Esophagus muscularis mucosa (tissue), 4 donors: ENCODE measurements at regions of chr20 and their contacts with region 1.

Region 1: GRCh38 chr20:41339507-41340326 is 904 bp upstream of the LPIN3 start:
- DNase-seq: peak; percentile 96
- H3K4me3 ChIP-seq: peak overlapping the region; percentile 46 to 60 (median 46)
- H3K27ac ChIP-seq: peak overlapping the region; percentile 74 to 82 (median 78)
- H3K4me1 ChIP-seq: peaks cover 24 to 49% (median 37%) of the 10 kb centered on the region in 4 donors
- H3K27me3 ChIP-seq: no peaks in the 10 kb centered on the region
- CTCF ChIP-seq: peak in 2 of 3 experiments; percentile 99
- EP300 ChIP-seq: no peak
- POLR2A ChIP-seq: no peak

Region 2: GRCh38 chr20:40962730-40963504 is 376.8 kb before region 1 on chr20:
- intact Hi-C with region 1: loop called (anchors 10 kb)
- DNase-seq: peak; percentile 93
- H3K4me3 ChIP-seq: no peak overlapping the region
- H3K27ac ChIP-seq: no peak overlapping the region
- H3K4me1 ChIP-seq: peaks cover 0 to 5% (median 2%) of the 10 kb centered on the region in 4 donors
- H3K27me3 ChIP-seq: no peaks in the 10 kb centered on the region
- CTCF ChIP-seq: peak; percentile 82 to 91 (median 91)
- EP300 ChIP-seq: no peak
- POLR2A ChIP-seq: no peak

Region 3: GRCh38 chr20:41136680-41137613 is 202.8 kb before region 1 on chr20 and contains the start of gene PLCG1:
- intact Hi-C with region 1: loop called (anchors 5 kb)
- DNase-seq: peak; percentile 95
- H3K4me3 ChIP-seq: peak within 1 kb of the TSS; percentile 79 to 93 (median 90)
- H3K27ac ChIP-seq: peak within 1 kb of the TSS; percentile 95 to 97 (median 96)
- H3K4me1 ChIP-seq: peaks cover 35 to 61% (median 57%) of the 10 kb centered on the region in 4 donors
- H3K27me3 ChIP-seq: no peaks in the 10 kb centered on the region
- CTCF ChIP-seq: no peak
- EP300 ChIP-seq: no peak
- POLR2A ChIP-seq: peak; percentile 61
- total RNA-seq, gene PLCG1: 68.4 to 119 (median 82.5) TPM

Region 4: DNA sequence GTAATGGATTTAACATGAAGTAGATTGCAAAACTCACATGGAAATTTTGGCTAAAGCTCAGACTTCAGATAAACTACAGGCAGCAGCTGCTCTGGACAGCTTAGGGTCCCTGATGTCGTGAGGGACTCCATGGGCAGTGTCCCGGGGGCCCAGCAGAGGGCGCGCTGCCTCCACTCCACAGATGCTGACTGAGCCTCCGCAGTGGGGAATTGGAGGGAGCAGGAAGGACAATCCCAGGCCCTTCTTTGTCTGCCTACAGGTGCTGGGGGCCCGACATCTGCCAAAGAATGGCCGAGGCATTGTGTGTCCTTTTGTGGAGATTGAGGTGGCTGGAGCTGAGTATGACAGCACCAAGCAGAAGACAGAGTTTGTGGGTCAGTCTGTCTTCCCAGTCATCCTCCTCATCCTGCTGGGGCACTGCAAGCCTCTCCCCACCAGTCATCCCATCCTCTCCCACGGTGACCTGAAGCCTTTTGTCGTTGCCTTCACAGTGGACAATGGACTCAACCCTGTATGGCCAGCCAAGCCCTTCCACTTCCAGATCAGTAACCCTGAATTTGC is 166.5 kb before region 1 on chr20:
- intact Hi-C with region 1: loop called (anchors 2 kb)
- DNase-seq: peak; percentile 98
- H3K4me3 ChIP-seq: no peak overlapping the region
- H3K27ac ChIP-seq: peak overlapping the region; percentile 77 to 85 (median 81)
- H3K4me1 ChIP-seq: peaks cover 68 to 74% (median 70%) of the 10 kb centered on the region in 4 donors
- H3K27me3 ChIP-seq: no peaks in the 10 kb centered on the region
- CTCF ChIP-seq: peak; percentile 98
- EP300 ChIP-seq: no peak
- POLR2A ChIP-seq: no peak

Region 5: DNA sequence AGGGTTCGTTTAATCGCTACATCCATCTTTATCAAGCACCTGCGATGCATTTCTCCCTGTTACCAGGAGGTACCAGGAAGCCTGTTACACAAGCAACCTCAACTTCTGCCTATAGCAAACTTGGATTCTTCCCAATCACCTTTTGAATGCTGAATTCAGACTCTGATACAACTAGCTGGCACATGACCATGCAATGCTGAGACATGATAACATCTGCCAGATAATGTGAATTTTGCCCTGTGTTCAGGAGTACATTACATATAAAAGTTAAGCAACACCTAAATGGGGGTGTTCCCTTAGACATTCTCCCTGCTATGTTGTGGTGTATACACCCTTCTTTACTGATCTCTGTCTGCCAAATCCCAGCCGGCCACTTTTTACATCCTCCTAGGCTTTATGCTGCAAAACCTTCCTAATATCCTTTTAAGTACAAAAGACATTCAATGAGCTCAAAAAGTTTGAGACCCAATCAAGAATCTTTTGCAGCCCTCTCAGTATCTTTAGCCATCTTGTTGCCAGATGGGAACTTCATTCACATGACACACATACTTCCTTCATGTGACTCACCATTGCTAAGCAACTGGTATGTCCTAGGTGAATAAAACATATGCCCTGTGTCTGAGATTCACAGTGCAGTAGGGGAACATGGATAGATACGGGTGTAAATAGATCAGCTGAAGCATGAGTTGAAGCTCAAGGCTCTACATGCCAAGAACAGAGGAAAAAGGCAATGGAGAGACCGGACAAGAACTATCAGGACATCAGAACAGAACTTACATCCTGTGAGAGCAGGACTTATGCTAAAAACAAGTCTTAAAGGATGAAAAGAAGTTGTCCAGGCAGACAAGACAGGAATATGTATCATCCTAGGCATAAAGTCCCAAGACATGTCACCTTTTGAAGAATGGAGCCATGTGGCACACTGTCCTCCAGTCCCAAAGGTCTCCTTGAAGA is 106.5 kb before region 1 on chr20:
- intact Hi-C with region 1: loop called (anchors 5 kb)
- DNase-seq: no peak
- H3K4me3 ChIP-seq: no peak overlapping the region
- H3K27ac ChIP-seq: peak overlapping the region; percentile 71 to 77 (median 74)
- H3K4me1 ChIP-seq: peaks cover 52 to 66% (median 53%) of the 10 kb centered on the region in 4 donors
- H3K27me3 ChIP-seq: no peaks in the 10 kb centered on the region
- CTCF ChIP-seq: no peak
- EP300 ChIP-seq: no peak
- POLR2A ChIP-seq: no peak

Region 6: GRCh38 chr20:41408156-41408794 is 68.6 kb after region 1 on chr20:
- intact Hi-C with region 1: loop called (anchors 5 kb)
- DNase-seq: no peak
- H3K4me3 ChIP-seq: no peak overlapping the region
- H3K27ac ChIP-seq: no peak overlapping the region
- H3K4me1 ChIP-seq: peaks cover 26 to 41% (median 34%) of the 10 kb centered on the region in 4 donors
- H3K27me3 ChIP-seq: no peaks in the 10 kb centered on the region
- CTCF ChIP-seq: no peak
- EP300 ChIP-seq: no peak
- POLR2A ChIP-seq: no peak

Region 7: DNA sequence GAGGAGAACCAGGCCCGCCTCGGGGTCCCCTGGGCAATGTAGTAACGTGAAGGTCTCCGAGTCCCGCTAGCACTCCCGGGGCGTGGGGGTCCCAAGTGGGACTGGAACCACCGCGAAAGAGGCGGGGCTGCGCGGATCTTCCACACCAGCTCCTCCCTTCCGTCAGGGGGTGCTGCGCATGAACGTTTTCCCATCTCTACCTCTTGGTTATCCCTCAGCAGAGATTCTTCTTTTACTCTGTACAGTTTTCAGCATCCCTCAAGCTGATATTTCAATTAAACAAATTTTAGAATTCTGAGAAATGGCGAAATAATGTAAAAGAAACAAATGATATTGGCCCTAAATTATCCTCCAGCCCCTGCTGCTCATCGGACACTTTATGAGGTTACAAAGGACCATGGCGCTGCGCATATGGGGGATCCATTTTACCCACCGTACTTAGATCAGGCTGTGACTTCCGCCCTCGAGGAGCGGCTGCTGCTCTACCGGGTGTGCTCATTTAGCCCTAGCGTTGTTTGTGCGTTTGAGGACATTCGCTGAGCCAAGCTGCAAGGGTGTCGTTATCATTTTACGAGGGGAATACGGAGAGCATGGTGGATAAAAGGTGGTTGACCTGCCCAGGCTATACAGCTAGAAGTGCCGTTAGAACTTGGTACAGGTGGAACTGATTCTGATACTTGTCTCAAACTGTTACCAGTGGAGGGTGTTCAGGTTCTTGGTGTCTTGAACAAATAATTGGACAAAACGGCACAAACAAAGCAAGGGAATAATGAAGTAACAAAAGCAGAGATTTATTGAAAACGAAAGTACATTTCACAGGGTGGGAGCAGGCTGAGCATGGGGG is 353.6 kb after region 1 on chr20:
- intact Hi-C with region 1: no loop called
- DNase-seq: peak; percentile 97
- H3K4me3 ChIP-seq: peak overlapping the region; percentile 80 to 89 (median 82)
- H3K27ac ChIP-seq: peak overlapping the region; percentile 87 to 93 (median 92)
- H3K4me1 ChIP-seq: peaks cover 7 to 14% (median 10%) of the 10 kb centered on the region in 4 donors
- H3K27me3 ChIP-seq: no peaks in the 10 kb centered on the region
- CTCF ChIP-seq: peak; percentile 43 to 57 (median 47)
- EP300 ChIP-seq: no peak
- POLR2A ChIP-seq: peak; percentile 23